AG04450 (cell line): ENCODE measurements at regions of chrX and their contacts with region 1.

Region 1: GRCh38 chrX:41116948-41117347 is 31.7 kb downstream of the USP9X start:
- DNase-seq: no peak
- H3K4me3 ChIP-seq: no peak overlapping the region
- H3K27ac ChIP-seq: no peak overlapping the region
- H3K27me3 ChIP-seq: no peaks in the 10 kb centered on the region
- CTCF ChIP-seq: no peak

Region 2: DNA sequence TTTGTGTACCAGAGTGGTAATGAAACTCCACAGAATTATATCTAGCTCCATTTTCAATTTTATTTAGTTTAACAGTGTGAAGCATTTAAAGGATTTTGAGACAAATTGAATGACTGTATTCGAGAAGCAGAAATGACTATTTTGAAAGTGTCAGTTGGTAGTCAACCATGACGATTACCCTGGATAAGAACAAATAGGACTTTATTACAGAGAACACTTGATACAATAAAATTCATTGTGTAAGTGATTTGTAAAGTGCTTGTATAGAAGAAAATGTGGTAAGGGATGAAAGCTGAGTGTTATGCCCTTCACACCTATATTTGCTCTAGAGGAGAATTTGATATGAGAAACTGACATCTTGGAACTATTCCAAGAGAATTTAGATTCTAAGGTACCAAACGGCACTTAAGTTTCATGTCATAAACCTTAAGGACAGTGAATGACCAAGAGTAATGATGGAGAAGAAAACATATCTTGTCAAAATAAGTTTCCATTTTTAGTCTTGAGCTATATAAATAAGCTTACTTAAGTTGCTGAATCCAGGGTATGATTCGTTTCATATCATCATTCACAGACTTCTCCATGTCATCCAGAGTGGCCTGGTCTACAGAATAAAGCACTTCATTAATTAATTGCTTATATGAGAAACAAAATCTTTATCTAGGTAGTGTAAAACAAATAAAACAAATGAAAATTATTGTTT is 416.2 kb before region 1 on chrX:
- CTCF ChIA-PET with region 1: interaction called, 12 read pairs
- POLR2A ChIA-PET with region 1: no interaction called
- DNase-seq: no peak
- H3K4me3 ChIP-seq: no peak overlapping the region
- H3K27ac ChIP-seq: no peak overlapping the region
- H3K27me3 ChIP-seq: no peaks in the 10 kb centered on the region
- CTCF ChIP-seq: no peak

Region 3: DNA sequence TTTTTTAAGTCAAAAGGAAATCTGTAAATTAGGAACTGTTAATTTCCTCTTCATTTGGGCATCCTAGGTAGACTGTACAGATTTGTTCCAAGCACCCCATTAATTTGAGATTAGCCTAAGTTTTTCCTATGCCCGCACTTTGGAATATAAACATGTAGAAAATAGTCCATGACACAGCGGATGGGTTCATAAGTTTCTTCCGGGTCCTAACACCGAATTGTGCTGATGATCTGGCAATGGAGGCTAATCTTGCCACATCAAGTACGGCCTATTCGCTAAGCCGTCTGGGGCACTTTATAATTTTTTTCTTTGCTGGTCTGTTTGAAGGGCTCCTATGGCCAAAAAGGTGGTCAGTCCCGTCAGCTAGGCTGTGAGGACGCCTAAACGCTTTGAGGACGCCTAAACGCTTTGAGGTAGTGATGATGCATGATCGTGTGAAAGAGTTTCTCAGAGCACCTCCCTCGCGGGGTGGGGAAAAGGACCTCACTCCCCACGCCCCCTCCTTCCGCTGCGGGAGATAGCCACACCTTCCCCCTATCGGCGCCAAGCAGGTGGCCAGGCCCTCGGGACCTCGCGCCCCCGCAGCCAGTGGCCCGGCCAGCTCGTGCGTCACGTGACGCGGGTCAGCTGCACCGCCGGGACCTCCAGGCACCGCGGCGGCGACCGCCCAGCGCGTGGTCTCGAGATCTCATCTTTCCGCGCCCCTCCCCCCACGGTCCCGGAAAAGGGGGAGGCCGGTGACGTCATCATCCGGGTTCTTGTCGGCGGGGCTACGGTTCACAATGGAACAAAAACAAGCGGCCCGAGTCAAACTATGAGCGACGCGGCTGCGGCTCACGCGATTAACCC is 32.7 kb before region 1 on chrX:
- CTCF ChIA-PET with region 1: interaction called, 18 read pairs
- POLR2A ChIA-PET with region 1: no interaction called
- DNase-seq: peak; percentile 87
- H3K4me3 ChIP-seq: peak overlapping the region; percentile 75
- H3K27ac ChIP-seq: peak overlapping the region; percentile 100
- H3K27me3 ChIP-seq: no peaks in the 10 kb centered on the region
- CTCF ChIP-seq: no peak

Region 4: GRCh38 chrX:41096339-41096955 is 20.5 kb before region 1 on chrX:
- CTCF ChIA-PET with region 1: interaction called, 14 read pairs
- POLR2A ChIA-PET with region 1: interaction called, 10 read pairs
- DNase-seq: no peak
- H3K4me3 ChIP-seq: no peak overlapping the region
- H3K27ac ChIP-seq: no peak overlapping the region
- H3K27me3 ChIP-seq: no peaks in the 10 kb centered on the region
- CTCF ChIP-seq: no peak

Region 5: DNA sequence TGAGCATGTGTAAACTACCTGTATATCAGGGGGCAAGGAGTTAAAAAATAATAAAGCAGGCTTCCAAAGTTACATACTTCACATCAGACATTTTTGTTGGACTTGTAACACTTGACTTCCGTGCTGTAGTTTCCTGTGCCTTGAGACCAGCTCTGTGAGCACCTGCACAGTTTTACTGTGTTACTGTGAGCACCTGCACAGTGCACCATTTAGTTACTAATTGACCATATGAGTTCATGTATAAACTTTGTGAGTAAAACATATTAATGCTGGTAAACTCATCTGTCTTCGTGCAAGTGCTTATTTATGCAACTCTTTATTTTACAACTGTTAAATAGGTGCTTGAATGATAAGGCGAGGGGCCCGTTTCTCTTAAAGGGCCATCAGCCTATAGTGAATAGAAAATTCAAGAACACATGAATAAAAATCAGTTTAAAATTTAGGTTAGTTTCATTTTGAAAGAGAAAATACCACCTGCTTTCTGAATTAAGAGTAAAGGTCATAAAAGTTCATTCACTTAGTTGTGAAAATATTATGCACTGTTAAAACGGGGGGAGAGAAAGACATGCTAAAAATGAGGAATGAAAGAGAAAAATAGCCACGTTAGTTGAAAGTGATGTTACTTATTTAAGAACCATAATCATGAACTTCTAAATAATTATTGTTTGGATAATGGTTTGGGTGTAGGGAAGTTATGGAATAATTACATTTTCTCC is 10.7 kb after region 1 on chrX:
- CTCF ChIA-PET with region 1: interaction called, 15 read pairs
- POLR2A ChIA-PET with region 1: no interaction called
- DNase-seq: no peak
- H3K4me3 ChIP-seq: no peak overlapping the region
- H3K27ac ChIP-seq: no peak overlapping the region
- H3K27me3 ChIP-seq: no peaks in the 10 kb centered on the region
- CTCF ChIP-seq: no peak